Psoas muscle (tissue), 8 donors: ENCODE measurements at regions of chr13 and their contacts with region 1.

Region 1: DNA sequence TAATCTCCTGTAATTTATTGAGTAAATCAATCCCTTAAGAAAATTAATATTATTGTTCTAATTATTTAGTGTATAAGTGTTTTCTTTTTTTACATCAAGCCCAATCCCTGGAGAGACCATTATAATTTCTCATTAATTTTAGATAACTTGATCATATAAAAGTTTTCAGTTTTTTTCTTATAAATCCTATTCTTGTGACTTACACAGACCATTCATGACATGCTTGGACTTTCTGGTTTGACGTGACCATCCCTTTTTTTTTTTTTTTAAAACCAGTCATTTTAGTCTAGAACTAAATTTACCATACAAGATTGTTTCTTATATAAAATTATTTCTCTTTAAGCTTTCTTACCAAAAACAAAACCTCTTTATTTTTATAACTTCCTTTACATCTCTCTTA is 5.4 kb upstream of the MTRF1 start:
- DNase-seq: no peak
- ATAC-seq: no peak
- H3K4me3 ChIP-seq: no peak overlapping the region
- H3K27ac ChIP-seq: no peak overlapping the region
- H3K4me1 ChIP-seq: no peaks in the 10 kb centered on the region
- H3K27me3 ChIP-seq: no peaks in the 10 kb centered on the region
- CTCF ChIP-seq: no peak

Region 2: DNA sequence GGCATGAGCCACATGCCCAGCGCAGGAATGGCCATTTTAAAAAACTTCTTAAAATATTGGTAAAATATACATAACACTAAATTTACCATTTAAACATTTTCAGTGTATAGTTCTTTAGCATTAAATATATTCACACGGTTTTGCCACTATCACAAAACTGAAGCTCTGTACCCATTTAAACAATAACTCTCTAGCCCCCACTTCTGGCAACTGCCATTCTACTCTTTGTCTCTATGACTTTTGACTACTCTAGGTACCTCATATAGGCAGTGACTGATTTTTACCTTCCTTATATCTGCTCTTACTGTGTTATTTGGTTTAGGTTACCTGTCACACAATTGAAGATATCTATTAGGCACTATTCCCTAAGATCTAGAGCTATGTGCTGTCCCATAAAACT is 72.1 kb before region 1 on chr13:
- intact Hi-C with region 1: no loop called
- DNase-seq: no peak
- ATAC-seq: no peak
- H3K4me3 ChIP-seq: no peak overlapping the region
- H3K27ac ChIP-seq: no peak overlapping the region
- H3K4me1 ChIP-seq: peaks cover 14% of the 10 kb centered on the region
- H3K27me3 ChIP-seq: no peaks in the 10 kb centered on the region
- CTCF ChIP-seq: no peak

Region 3: GRCh38 chr13:41310963-41311606 is 42.3 kb after region 1 on chr13 and contains the start of gene NAA16:
- intact Hi-C with region 1: loop called (anchors 5 kb)
- DNase-seq: peak; percentile 94 to 97
- ATAC-seq: peak; percentile 93 to 97 (median 94)
- H3K4me3 ChIP-seq: peak within 1 kb of the TSS; percentile 98
- H3K27ac ChIP-seq: peak within 1 kb of the TSS; percentile 94
- H3K4me1 ChIP-seq: peaks cover 32% of the 10 kb centered on the region
- H3K27me3 ChIP-seq: no peaks in the 10 kb centered on the region
- CTCF ChIP-seq: peak; percentile 5
- total RNA-seq, gene NAA16: 6.8 to 22.3 (median 8.3) TPM

Region 4: GRCh38 chr13:41344358-41344757 is 75.6 kb after region 1 on chr13:
- intact Hi-C with region 1: no loop called
- DNase-seq: no peak
- ATAC-seq: no peak
- H3K4me3 ChIP-seq: no peak overlapping the region
- H3K27ac ChIP-seq: no peak overlapping the region
- H3K4me1 ChIP-seq: no peaks in the 10 kb centered on the region
- H3K27me3 ChIP-seq: no peaks in the 10 kb centered on the region
- CTCF ChIP-seq: no peak

Region 5: GRCh38 chr13:41622432-41623429 is 354.0 kb after region 1 on chr13:
- intact Hi-C with region 1: no loop called
- DNase-seq: no peak
- ATAC-seq: peak in 3 of 4 donors; percentile 71 to 86 (median 72)
- H3K4me3 ChIP-seq: no peak overlapping the region
- H3K27ac ChIP-seq: no peak overlapping the region
- H3K4me1 ChIP-seq: no peaks in the 10 kb centered on the region
- H3K27me3 ChIP-seq: no peaks in the 10 kb centered on the region
- CTCF ChIP-seq: no peak

Region 6: DNA sequence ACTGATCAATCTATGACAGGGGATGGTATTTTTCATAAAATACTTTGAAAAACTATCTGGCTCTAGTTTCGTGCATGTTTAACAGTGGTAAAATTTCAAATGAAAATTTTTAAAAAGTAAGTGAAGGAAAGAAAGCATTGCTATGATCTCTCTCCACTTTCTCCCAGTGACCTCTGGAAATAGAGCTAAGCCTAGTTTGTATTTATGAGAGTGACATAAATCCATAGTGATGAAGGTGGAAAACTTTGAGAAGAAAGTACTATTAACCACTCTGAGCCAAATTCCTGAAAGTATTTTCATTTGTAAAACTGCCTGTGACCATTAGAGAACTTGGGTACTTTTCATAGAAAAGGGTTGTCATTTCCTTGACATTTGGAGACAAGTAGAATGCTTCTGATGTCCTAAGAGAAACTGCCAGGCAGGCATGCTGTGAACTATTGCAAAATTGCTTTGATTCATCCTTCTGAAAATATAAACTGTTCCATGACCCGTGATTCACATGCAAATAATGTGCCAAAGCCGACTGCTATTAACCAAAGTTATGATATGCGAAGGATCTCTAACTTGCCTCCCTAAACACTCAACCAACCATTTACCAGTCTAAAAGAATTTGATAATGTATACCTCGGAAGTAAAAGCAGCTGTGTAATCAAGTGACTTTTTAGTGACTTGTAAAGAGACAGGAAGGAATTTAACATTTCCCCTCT is 558.9 kb after region 1 on chr13:
- intact Hi-C with region 1: no loop called
- DNase-seq: no peak
- ATAC-seq: peak; percentile 75 to 96 (median 90)
- H3K4me3 ChIP-seq: no peak overlapping the region
- H3K27ac ChIP-seq: peak overlapping the region; percentile 62
- H3K4me1 ChIP-seq: peaks cover 15% of the 10 kb centered on the region
- H3K27me3 ChIP-seq: no peaks in the 10 kb centered on the region
- CTCF ChIP-seq: no peak